ENCODE measurements at regions of chr12 and their contacts with region 1.

Region 1: GRCh38 chr12:14769969-14770495 is 33.2 kb downstream of the WBP11 start:
- DNase-seq: peak; percentile 69 to 92
- ATAC-seq: peak; percentile 65 to 72
- H3K4me3 ChIP-seq: peak overlapping the region; percentile 79
- H3K27ac ChIP-seq: peak overlapping the region; percentile 88 to 97
- H3K4me1 ChIP-seq: peaks cover 18% of the 10 kb centered on the region
- CTCF ChIP-seq: peak; percentile 58
- EP300 ChIP-seq: no peak
- POLR2A ChIP-seq: peak; percentile 84; the same call in 1 of the 2 replicates
- RAD21 ChIP-seq: peak; percentile 31 to 33; a peak in 4 of 5 replicates

Region 2: GRCh38 chr12:14365294-14366208 is 404.5 kb before region 1 on chr12 and contains the start of gene ATF7IP:
- CTCF ChIA-PET with region 1: no interaction called
- POLR2A ChIA-PET with region 1: interaction called, 22 read pairs
- DNase-seq: peak; percentile 99 to 100
- ATAC-seq: peak; percentile 98 to 99
- H3K4me3 ChIP-seq: peak within 1 kb of the TSS; percentile 59
- H3K27ac ChIP-seq: peak within 1 kb of the TSS; percentile 86 to 94
- H3K4me1 ChIP-seq: no peaks in the 10 kb centered on the region
- CTCF ChIP-seq: peak; percentile 54
- EP300 ChIP-seq: no peak
- POLR2A ChIP-seq: peak; percentile 77
- RAD21 ChIP-seq: peak; percentile 46 to 50
- polyA plus RNA-seq, gene ATF7IP: 14.2 and 15.2 TPM in 2 replicates

Region 3: DNA sequence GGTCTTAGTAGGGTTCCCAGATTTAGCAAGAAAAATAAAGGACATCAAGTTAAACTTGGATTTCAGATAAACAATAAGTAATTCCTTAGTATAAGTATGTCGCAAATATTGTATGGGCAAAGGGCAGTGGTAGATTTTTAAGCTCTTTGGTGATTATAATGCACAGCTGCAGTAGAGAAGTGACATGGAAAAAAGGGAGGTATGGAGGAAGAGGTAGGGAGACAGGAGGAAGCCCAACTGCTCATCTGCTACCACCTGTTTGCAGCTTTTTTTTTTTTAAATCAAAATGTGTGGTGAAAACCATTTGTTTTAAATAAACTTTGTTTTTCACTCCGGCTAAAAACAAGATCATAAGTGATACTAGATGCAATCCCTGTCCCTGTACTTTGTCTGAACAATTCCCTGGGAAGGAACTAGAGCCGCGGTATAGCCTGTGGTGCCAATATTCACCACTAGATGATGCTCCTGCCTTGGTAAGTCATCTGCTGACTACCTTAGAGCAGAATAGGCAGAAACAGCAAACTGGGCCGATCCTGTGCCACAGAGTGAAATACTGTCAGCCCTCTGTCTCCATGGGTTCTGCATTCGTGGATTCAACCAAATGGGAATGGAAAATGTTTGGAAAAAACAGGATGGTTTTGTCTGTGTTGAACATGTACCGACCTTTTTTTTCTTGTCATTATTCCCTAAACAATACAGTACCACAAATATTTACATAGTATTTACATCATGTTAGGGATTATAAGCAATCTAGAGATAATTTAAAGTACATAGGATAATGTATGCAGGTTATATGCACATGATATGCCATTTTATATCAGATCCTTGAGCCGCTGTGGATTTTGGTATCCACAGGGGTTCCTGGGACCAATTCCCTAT is 140.0 kb before region 1 on chr12:
- CTCF ChIA-PET with region 1: no interaction called
- POLR2A ChIA-PET with region 1: no interaction called
- DNase-seq: peak; percentile 63 to 79
- ATAC-seq: peak; percentile 100
- H3K4me3 ChIP-seq: no peak overlapping the region
- H3K27ac ChIP-seq: no peak overlapping the region
- H3K4me1 ChIP-seq: no peaks in the 10 kb centered on the region
- CTCF ChIP-seq: peak; percentile 89
- EP300 ChIP-seq: no peak
- POLR2A ChIP-seq: no peak
- RAD21 ChIP-seq: peak; percentile 88 to 97

Region 4: DNA sequence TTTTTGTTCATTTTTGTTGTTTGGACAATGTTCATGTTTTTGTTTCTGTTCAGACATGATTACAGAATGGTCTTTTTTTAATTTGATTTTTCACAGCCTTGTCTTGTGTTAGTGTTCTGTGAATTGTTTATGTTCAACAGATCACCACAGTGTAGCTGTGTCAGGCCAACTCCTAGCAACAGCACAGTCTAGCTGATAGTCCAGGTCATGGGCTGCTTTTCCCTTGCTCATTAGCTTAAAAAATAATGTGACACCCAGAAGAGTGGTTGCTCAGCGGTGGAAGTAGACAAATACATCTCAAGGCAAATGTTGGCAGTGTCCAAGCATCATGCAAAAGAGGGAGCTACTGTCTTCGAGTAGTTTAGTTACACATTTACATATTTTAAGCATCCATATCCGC is 10.8 kb after region 1 on chr12:
- CTCF ChIA-PET with region 1: interaction called, 4 read pairs
- POLR2A ChIA-PET with region 1: interaction called, 13 read pairs
- DNase-seq: no peak
- ATAC-seq: 0 out of 6 replicates have a peak, but pooled peaks of 1 of the 2 experiments have one; percentile 13
- H3K4me3 ChIP-seq: no peak overlapping the region
- H3K27ac ChIP-seq: no peak overlapping the region
- H3K4me1 ChIP-seq: peaks cover 17% of the 10 kb centered on the region
- CTCF ChIP-seq: no peak
- EP300 ChIP-seq: no peak
- POLR2A ChIP-seq: no peak
- RAD21 ChIP-seq: no peak

Region 5: DNA sequence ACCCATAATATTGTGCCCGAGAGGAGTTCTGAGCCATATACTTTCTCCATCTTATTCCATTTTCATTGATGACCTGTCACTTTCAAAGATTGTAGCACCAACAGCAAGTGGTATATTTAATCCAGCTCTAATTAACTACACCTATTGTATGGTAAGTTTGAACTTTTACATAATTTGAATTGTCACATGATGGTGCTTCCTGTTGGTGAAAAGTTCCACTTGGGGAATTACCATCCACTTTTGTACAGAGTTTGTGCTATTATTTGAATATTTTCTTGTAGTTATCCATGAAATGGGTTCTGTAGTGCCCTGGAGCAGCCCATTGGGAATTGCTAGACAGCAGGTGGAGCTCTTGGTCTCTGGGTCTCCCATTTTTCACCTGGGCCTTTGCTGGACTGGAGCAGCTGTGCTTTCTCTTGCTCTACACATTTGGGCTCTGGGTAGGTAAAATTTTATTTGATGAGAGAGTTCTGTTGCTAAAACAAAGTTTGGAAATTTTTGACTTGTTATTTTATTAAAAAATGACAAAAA is 41.0 kb after region 1 on chr12:
- CTCF ChIA-PET with region 1: interaction called, 13 read pairs
- POLR2A ChIA-PET with region 1: interaction called, 4 read pairs
- DNase-seq: peak; percentile 38 to 58
- ATAC-seq: peak; percentile 95 to 97
- H3K4me3 ChIP-seq: no peak overlapping the region
- H3K27ac ChIP-seq: no peak overlapping the region
- H3K4me1 ChIP-seq: peaks cover 14% of the 10 kb centered on the region; the same call in 1 of the 3 replicates
- CTCF ChIP-seq: peak; percentile 89
- EP300 ChIP-seq: no peak
- POLR2A ChIP-seq: no peak
- RAD21 ChIP-seq: peak; percentile 94 to 95

Region 6: DNA sequence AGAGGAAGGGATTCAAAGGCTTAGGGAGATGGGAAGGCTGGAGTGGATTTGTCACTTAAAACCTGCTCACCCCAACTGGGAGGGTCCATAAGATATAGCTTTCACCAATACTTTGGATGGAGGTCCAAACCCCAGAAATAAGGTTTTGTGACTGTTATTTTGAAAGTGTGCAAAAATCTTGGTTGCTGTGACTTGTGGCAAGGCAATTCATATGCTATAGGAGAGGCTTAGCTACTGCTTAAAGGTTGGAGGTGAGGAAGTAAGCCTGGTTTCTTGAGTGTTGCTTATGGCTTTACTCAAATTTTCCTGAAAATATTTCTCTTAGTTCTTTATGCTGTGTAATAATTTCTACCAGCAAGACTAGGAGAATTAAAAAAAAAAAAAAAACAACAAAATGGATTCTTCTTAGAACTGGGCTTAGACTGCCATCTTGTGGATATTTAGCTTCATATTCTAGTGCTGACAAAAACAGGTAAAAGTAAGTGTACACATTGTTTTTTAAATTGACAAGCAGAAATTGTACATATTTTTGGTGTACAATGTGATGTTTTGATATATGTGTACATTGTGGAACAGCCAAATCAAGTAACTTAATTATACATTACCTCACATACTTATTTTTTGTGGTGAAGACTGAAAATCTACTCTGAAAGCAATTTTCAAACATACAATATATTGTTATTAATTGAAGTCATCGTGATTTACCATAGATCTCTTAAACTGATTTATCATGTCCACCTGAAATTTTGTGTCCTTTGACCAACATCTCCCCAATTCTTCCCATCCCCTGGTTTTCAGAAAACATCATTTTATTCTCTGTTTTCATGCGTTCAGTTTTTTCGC is 225.8 kb after region 1 on chr12:
- CTCF ChIA-PET with region 1: interaction called, 28 read pairs
- POLR2A ChIA-PET with region 1: interaction called, 19 read pairs
- DNase-seq: peak; percentile 25 to 81
- ATAC-seq: peak in 1 of 2 experiments; percentile 73; a peak in 4 of 6 replicates
- H3K4me3 ChIP-seq: no peak overlapping the region
- H3K27ac ChIP-seq: no peak overlapping the region
- H3K4me1 ChIP-seq: peaks cover 22% of the 10 kb centered on the region; the same call in 2 of the 3 replicates
- CTCF ChIP-seq: peak; percentile 86
- EP300 ChIP-seq: no peak
- POLR2A ChIP-seq: no peak
- RAD21 ChIP-seq: peak; percentile 91 to 94